ENCODE measurements at regions of chr12 and their contacts with region 1.

Region 1: GRCh38 chr12:47758834-47759690 is at the start of gene RAPGEF3:
- DNase-seq: peak; percentile 86
- CTCF ChIP-seq: peak; percentile 68

Region 2: DNA sequence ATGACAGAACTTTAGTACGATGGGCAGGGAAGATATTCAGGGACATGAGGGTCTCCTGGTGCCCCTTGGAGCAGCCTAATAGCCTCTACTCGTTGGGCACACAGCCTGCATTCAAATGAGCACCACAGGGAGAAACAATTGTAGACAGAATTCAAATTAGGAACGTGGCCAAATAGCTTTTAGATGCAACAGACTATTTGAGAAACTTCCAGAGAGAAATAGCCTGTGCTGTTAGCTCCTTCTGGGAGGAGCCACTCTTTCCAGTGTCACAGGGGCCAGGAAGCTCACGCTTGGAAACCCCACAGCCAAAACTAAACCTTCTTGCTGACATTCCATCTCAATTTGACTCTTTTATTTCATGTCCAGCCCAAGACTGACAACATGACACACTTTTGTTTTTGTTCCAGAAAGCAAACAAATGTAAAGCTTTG is 167.7 kb before region 1 on chr12:
- CTCF ChIA-PET with region 1: no interaction called
- POLR2A ChIA-PET with region 1: no interaction called
- DNase-seq: no peak
- CTCF ChIP-seq: no peak

Region 3: DNA sequence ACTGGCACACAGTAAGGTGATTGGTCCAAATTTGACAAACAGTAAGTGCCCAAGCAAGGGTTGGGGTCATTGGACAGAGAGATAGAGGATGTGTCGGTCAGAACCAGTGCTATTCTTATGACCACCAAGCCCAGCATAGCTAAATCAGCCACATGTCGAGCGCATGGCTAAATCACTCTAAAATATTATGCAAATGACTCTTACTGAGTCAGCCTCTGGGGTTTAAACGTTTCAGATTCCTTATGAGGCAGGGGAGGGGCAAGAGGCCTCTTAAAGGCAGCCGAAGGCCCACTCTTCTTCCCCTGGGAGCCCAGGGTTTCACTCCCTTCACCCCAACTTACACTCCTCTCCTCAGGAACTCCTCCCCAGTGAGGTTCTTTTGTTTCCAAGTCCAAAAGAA is 33.2 kb before region 1 on chr12:
- CTCF ChIA-PET with region 1: interaction called, 16 read pairs
- POLR2A ChIA-PET with region 1: no interaction called
- DNase-seq: peak; percentile 67
- CTCF ChIP-seq: no peak

Region 4: DNA sequence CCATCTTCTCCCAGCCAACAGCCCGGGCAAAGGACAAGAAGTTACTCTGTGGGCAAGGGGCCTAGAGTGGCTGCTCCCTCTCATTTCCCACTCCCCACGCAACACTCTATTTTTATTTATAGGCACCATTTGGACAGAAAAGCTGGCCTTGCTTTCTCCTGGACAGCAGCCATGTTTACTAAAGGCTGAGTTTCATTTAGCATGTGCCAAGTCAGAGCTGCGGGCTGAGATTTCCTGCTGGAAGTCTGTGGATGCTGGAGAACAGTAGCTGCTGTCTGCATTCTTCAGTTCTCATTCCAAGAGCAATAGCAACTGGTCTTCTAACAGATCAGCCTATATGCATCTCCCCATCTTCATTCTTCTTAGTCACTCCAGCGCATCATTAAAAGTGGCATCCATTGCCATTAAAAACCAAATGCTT is 236.9 kb after region 1 on chr12:
- CTCF ChIA-PET with region 1: no interaction called
- POLR2A ChIA-PET with region 1: no interaction called
- DNase-seq: no peak
- CTCF ChIP-seq: no peak

Measured in GM10248 (cell line).